Activated CD4-positive, alpha-beta memory T cell treated with anti-CD3 and anti-CD28 coated beads for 36 hours (primary cell): ENCODE measurements at regions of chr1 and their contacts with region 1.

Region 1: DNA sequence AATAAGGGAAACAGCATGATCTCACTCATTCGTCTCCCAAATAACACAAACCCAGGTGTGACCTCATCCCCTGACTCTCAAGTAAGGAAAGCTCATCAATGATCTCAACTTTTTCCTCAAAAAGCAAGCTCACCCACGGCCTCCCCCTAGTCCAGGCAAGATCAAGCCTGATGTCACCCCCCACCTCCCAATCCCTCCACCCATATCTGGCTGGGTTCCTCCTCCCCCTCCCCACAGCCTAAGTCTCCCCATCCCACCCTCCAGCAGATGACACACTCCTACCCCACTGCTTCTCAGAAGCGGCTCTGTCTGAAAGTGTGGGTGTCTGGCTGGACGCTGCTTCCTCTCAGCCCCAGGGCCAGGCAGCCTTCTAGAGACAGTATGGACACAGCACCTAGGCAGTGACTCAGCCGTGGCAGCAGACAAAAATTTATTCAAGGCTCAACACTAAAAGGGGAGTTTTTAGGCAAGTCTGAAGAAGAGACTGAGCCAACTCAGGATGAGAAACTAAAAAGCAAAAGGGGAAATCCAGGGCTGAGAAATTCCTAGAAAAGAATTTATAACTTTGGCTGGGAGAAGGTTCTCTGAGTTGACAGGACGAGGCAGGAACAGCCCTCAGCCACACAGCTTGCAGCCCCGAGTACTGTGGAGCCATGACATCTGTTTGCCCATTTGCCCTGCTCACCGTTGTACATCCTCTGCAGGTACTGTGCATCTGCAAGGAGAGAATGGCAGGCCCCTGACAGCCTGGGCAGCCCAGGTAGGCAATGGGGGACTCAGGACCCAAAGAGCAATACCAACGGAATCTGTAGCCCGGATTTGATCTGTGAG is 81.6 kb upstream of the LRRC8D start:
- DNase-seq: peak; percentile 78
- H3K4me3 Mint-ChIP-seq: peak overlapping the region; percentile 68
- H3K27ac Mint-ChIP-seq: peak overlapping the region; percentile 83
- H3K4me1 Mint-ChIP-seq: peaks cover 45% of the 10 kb centered on the region
- H3K27me3 Mint-ChIP-seq: no peaks in the 10 kb centered on the region

Region 2: GRCh38 chr1:89681045-89681729 is 58.0 kb before region 1 on chr1:
- CTCF ChIA-PET with region 1: no interaction called
- POLR2A ChIA-PET with region 1: no interaction called
- intact Hi-C with region 1: no loop called
- DNase-seq: no peak
- H3K4me3 Mint-ChIP-seq: no peak overlapping the region
- H3K27ac Mint-ChIP-seq: peak overlapping the region; percentile 26
- H3K4me1 Mint-ChIP-seq: peaks cover 59% of the 10 kb centered on the region
- H3K27me3 Mint-ChIP-seq: no peaks in the 10 kb centered on the region

Region 3: GRCh38 chr1:89757532-89757931 is 18.3 kb after region 1 on chr1:
- CTCF ChIA-PET with region 1: interaction called, 9 read pairs
- POLR2A ChIA-PET with region 1: interaction called, 4 read pairs
- intact Hi-C with region 1: loop called (anchors 1 kb)
- DNase-seq: peak; percentile 82
- H3K4me3 Mint-ChIP-seq: peak overlapping the region; percentile 57
- H3K27ac Mint-ChIP-seq: peak overlapping the region; percentile 77
- H3K4me1 Mint-ChIP-seq: peaks cover 74% of the 10 kb centered on the region
- H3K27me3 Mint-ChIP-seq: no peaks in the 10 kb centered on the region

Region 4: DNA sequence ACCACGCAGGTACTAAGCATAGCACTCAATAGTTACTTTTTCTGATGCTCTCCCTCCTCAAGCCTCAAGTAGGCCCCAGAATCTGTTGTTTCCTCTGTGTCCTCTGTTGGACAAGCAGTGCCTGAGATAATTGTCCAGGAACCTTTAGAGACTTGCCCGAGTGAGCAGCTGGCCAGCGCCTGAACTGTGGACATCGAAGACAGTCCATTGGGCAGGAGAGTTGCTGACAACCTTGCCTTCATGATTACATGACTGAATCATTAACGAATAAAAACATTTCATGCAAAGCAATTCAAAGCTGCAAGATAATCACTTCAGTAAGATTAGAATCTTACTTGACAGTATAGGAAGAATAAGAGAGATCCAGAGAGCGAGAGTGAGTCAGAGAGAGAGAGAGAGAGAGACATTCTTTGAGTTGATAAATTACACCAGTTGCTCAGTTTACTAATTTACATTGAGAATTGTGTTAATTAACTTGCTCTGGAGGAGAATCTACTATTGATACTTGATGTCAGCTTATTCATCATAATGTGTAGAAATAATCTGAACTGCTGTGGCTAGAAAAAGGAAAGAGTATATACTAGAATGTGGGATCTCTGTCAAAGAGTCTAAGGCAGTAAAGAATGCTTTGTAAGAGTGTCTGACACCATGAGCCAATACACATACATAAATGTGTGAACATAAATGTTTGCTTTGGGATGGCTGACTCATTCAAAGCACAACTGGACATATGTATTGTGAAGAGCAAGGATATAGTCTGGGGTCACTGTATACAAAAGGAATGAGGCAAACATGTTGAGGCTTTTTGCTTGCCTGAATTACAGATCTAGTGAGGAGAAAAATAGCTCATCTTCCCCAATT is 471.6 kb after region 1 on chr1:
- CTCF ChIA-PET with region 1: no interaction called
- POLR2A ChIA-PET with region 1: no interaction called
- intact Hi-C with region 1: no loop called
- DNase-seq: no peak
- H3K4me3 Mint-ChIP-seq: no peak overlapping the region
- H3K27ac Mint-ChIP-seq: no peak overlapping the region
- H3K4me1 Mint-ChIP-seq: no peaks in the 10 kb centered on the region
- H3K27me3 Mint-ChIP-seq: no peaks in the 10 kb centered on the region